CD8-positive, alpha-beta T cell (primary cell): ENCODE measurements at regions of chr6 and their contacts with region 1.

Region 1: GRCh38 chr6:30821862-30822782 is 62.2 kb upstream of the DDR1 start:
- DNase-seq: peak in 2 of 9 experiments; percentile 58 to 64
- ATAC-seq: peak; percentile 44
- H3K4me3 ChIP-seq: no peak overlapping the region
- H3K4me3 Mint-ChIP-seq: no peak overlapping the region
- H3K27ac ChIP-seq: peak overlapping the region in 1 of 2 experiments; percentile 3
- H3K27ac Mint-ChIP-seq: peak overlapping the region; percentile 81
- H3K4me1 ChIP-seq: peaks cover 10% of the 10 kb centered on the region
- H3K4me1 Mint-ChIP-seq: peaks cover 62% of the 10 kb centered on the region
- H3K27me3 ChIP-seq: no peaks in the 10 kb centered on the region
- H3K27me3 Mint-ChIP-seq: no peaks in the 10 kb centered on the region
- CTCF ChIP-seq: peak; percentile 61

Region 2: DNA sequence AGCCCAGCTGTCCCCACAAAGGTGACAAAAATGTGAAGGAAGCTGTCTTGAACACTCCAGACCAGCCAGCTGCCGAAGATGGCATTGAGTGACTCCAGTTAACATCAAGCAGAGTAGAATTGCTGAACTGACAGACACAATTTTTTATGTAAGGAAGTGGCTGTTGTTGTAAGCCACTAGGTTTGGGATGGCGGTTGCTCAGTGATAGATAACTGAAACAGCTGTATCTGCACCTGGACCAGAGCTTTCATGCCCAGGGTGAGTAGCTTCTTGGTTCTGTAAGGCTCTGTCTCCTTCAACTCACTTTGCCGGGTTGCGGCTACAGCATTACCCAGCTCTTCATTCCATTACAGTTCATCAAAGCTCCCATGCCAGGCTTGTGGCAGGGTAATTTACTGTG is 12.5 kb after region 1 on chr6:
- CTCF ChIA-PET with region 1: interaction called, 75 read pairs
- POLR2A ChIA-PET with region 1: interaction called, 6 read pairs
- intact Hi-C with region 1: no loop called
- DNase-seq: peak in 4 of 9 experiments; percentile 24 to 53 (median 40)
- ATAC-seq: peak; percentile 47
- H3K4me3 ChIP-seq: no peak overlapping the region
- H3K4me3 Mint-ChIP-seq: peak overlapping the region; percentile 56
- H3K27ac ChIP-seq: peak overlapping the region in 1 of 2 experiments; percentile 51
- H3K27ac Mint-ChIP-seq: peak overlapping the region; percentile 90
- H3K4me1 ChIP-seq: peaks cover 36% of the 10 kb centered on the region
- H3K4me1 Mint-ChIP-seq: peaks cover 51% of the 10 kb centered on the region
- H3K27me3 ChIP-seq: no peaks in the 10 kb centered on the region
- H3K27me3 Mint-ChIP-seq: no peaks in the 10 kb centered on the region
- CTCF ChIP-seq: no peak

Region 3: GRCh38 chr6:30844091-30844535 is 22.0 kb after region 1 on chr6:
- CTCF ChIA-PET with region 1: interaction called, 75 read pairs
- POLR2A ChIA-PET with region 1: no interaction called
- intact Hi-C with region 1: no loop called
- DNase-seq: no peak
- ATAC-seq: no peak
- H3K4me3 ChIP-seq: no peak overlapping the region
- H3K4me3 Mint-ChIP-seq: no peak overlapping the region
- H3K27ac ChIP-seq: no peak overlapping the region
- H3K27ac Mint-ChIP-seq: no peak overlapping the region
- H3K4me1 ChIP-seq: peaks cover 13% of the 10 kb centered on the region
- H3K4me1 Mint-ChIP-seq: peaks cover 38% of the 10 kb centered on the region
- H3K27me3 ChIP-seq: no peaks in the 10 kb centered on the region
- H3K27me3 Mint-ChIP-seq: no peaks in the 10 kb centered on the region
- CTCF ChIP-seq: no peak

Region 4: DNA sequence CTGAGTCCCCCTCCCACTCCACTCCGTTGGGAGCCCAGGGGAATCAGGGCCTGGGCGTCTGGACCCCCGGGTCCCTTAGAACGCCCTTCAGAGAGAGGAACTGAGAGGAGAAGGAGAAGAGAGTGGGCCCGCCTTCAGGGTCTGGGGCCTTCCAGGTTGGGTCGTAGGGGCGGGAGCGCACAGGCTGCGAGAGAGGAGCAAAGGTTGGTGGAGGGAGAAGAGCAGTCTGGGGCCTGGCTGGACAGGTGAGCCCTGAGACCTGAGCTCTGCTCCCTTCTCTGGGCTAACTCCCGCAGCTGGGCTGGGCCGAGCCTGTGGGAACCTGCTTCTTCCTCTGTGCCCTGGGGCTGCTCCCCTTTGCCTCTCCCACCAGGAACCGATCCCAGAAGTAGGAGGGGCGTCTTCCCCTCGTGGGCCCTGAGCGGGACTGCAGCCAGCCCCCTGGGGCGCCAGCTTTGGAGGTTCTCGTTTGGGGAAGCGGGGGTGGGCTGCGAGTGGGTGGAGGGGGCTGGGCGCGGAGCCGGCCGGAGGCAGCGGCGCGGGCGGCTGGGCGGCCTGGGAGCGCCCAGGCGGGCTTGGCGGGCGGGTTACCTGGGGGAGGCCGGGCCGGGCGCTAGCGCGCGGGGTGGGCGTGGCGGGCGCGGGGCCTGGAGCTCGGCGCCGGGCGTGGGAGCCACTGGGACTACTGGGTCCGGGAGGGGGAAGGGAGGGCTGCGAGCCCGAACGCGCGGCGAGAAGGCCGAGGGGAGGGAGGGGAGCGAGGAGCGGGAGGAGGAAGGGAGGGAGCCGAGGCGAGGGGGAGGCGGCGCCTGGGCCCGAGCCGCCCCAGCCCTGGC is 61.8 kb after region 1 on chr6 and contains the start of gene DDR1:
- CTCF ChIA-PET with region 1: interaction called, 113 read pairs
- POLR2A ChIA-PET with region 1: interaction called, 4 read pairs
- intact Hi-C with region 1: no loop called
- DNase-seq: peak in 8 of 9 experiments; percentile 25 to 73 (median 52)
- ATAC-seq: peak; percentile 60
- H3K4me3 ChIP-seq: peak within 1 kb of the TSS; percentile 44 to 55
- H3K4me3 Mint-ChIP-seq: peak within 1 kb of the TSS; percentile 82
- H3K27ac ChIP-seq: peak within 1 kb of the TSS in 1 of 2 experiments; percentile 7
- H3K27ac Mint-ChIP-seq: peak within 1 kb of the TSS; percentile 86
- H3K4me1 ChIP-seq: peaks cover 38% of the 10 kb centered on the region
- H3K4me1 Mint-ChIP-seq: peaks cover 38% of the 10 kb centered on the region
- H3K27me3 ChIP-seq: no peaks in the 10 kb centered on the region
- H3K27me3 Mint-ChIP-seq: no peaks in the 10 kb centered on the region
- CTCF ChIP-seq: no peak
- total RNA-seq, gene DDR1: 5.9 to 8.0 TPM